Heart left ventricle (tissue), 16 donors: ENCODE measurements at regions of chr4 and their contacts with region 1.

Region 1: DNA sequence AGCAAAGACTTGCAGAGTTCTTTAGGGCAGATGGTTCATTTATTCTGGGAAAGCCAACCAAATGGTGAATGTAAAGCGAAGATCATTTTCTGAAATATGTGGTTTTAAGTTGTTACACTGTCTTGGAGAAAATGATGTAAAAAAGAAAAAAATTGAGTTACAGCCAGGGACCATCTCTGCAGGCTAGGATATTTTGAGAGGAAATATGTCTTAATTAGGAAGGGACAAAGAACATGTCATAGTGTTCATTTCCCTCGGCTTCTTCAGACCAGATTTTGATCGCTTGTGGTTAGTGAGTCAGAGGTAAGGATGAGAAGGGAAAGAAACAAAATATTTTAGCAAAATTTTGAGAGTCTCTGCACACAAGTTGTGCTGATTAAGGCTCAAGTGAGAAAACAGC is 59.0 kb upstream of the C1QTNF7 start:
- DNase-seq: no peak
- ATAC-seq: peak in 1 of 4 donors; percentile 14
- H3K4me3 ChIP-seq: no peak overlapping the region
- H3K27ac ChIP-seq: no peak overlapping the region
- H3K4me1 ChIP-seq: peaks cover 0 to 24% (median 2%) of the 10 kb centered on the region in 12 donors
- H3K27me3 ChIP-seq: no peaks in the 10 kb centered on the region
- CTCF ChIP-seq: no peak
- POLR2A ChIP-seq: no peak

Region 2: DNA sequence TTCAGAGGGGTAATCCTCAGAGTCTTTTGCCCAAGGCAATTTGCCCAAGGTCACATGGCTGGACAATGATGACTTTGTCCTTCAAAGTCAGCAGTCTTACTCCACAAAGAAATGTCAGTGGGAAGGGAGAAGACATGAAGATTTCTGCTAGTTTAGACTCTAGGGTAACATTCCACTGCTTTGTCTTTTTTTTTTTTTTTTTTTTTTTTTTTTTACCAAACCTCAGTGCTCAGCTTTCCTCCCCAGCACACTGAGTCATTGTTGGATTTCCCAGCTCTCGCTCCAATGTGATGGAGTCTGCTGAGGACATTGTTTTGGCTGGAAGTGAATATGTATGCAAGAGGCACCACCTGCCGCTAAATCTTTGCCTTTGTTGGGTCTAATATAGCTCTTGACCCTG is 51.8 kb after region 1 on chr4:
- intact Hi-C with region 1: loop called in 1 of 10 experiments (anchors 5 kb)
- DNase-seq: no peak
- ATAC-seq: peak in 3 of 4 donors; percentile 34 to 81 (median 48)
- H3K4me3 ChIP-seq: no peak overlapping the region
- H3K27ac ChIP-seq: no peak overlapping the region
- H3K4me1 ChIP-seq: peaks cover 0 to 11% (median 0%) of the 10 kb centered on the region in 12 donors
- H3K27me3 ChIP-seq: no peaks in the 10 kb centered on the region
- CTCF ChIP-seq: no peak
- POLR2A ChIP-seq: no peak

Region 3: DNA sequence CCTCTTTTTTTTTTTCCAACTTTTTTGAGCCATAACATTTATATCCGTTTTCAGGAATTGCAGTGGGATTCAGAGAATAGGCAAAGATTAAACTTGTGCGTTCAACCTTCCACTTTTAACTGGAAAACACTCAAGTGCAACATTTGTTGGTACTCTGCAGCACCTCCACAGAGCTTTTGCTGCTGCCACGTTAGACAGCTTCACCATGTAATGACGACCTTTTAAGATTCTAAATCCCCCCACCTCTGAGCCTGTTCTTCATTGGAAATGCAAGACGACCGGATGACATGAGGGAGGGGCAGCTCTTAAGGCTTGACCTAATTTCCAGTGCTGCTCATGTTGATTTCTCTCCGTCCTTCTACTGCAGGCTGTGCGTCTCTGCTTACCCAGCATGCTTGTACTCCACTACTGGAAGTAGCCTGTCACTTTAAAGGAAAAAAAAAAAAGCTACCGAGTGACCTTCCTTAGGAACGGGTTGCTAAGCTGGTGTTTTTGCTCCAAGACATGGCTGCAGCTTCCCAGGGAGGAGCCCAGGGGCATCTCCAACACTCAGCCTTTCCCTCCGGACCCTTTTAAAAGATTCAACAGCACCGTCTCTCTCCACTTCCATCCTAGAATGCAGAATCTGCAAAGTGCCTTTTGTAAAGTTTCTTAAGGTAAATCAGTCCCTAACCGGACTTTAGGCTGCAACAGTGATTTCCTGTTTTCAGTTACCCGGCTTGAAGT is 100.7 kb after region 1 on chr4 and contains the start of gene CC2D2A:
- intact Hi-C with region 1: no loop called
- DNase-seq: peak in 2 of 5 donors; percentile 22 to 35
- ATAC-seq: peak; percentile 78 to 94 (median 90)
- H3K4me3 ChIP-seq: peak within 1 kb of the TSS; percentile 28 to 76 (median 62)
- H3K27ac ChIP-seq: peak within 1 kb of the TSS in 11 of 12 donors; percentile 1 to 74 (median 42)
- H3K4me1 ChIP-seq: peaks cover 0 to 37% (median 12%) of the 10 kb centered on the region in 12 donors
- H3K27me3 ChIP-seq: no peaks in the 10 kb centered on the region
- CTCF ChIP-seq: no peak
- POLR2A ChIP-seq: no peak
- total RNA-seq, gene CC2D2A: 3.1 to 14.4 (median 9.0) TPM